ENCODE measurements at regions of chr1 and their contacts with region 1.

Region 1: DNA sequence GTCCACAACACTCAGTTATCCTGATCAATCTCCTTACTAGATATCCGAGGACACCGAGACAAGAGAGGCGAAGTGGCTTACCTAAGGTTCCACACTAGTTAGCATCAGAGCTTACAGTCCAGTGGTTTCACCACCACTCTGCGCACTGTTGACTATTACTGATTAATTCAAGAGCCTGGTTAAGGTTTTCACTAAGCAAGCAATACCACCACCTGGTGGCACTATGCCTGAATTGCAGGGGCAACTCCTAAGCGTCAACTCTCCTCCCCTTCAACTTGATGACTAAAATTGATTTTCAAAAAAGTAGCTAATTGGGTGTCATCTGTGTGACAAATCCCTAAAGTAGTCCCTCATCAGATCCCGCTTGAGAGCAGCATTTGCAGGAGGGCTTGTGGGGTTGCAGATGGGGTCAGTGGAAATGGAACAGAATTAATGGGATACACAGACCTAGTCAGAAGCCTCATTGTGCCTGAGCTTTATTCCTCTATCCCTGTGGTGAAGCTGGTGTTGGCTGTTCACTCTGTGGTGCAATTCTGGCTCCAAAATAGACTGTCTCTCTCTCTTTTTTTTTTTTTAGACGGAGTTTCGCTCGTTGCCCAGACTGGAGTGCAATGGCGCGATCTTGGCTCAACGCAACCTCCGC is 9.1 kb downstream of the TTC22 start:
- ATAC-seq: peak in 1 of 8 experiments; percentile 15
- H3K4me3 ChIP-seq: no peak overlapping the region
- H3K27ac ChIP-seq: no peak overlapping the region
- H3K4me1 ChIP-seq: peaks cover 24 to 44% of the 10 kb centered on the region in 2 donors

Region 2: GRCh38 chr1:54052934-54053744 is 738.9 kb before region 1 on chr1 and contains the starts of genes TCEANC2 and TMEM59:
- in situ Hi-C with region 1: loop called in 1 of 9 experiments (anchors 25 kb)
- ATAC-seq: peak; percentile 87 to 94 (median 92)
- H3K4me3 ChIP-seq: peak within 1 kb of the TSS; percentile 60 to 89 (median 76)
- H3K27ac ChIP-seq: peak within 1 kb of the TSS; percentile 79 to 90
- H3K4me1 ChIP-seq: peaks cover 7 to 24% of the 10 kb centered on the region in 2 donors
- total RNA-seq, gene TCEANC2: 3.0 to 10.1 (median 7.4) TPM
- total RNA-seq, gene TMEM59: 114 to 406 (median 146) TPM

Region 3: DNA sequence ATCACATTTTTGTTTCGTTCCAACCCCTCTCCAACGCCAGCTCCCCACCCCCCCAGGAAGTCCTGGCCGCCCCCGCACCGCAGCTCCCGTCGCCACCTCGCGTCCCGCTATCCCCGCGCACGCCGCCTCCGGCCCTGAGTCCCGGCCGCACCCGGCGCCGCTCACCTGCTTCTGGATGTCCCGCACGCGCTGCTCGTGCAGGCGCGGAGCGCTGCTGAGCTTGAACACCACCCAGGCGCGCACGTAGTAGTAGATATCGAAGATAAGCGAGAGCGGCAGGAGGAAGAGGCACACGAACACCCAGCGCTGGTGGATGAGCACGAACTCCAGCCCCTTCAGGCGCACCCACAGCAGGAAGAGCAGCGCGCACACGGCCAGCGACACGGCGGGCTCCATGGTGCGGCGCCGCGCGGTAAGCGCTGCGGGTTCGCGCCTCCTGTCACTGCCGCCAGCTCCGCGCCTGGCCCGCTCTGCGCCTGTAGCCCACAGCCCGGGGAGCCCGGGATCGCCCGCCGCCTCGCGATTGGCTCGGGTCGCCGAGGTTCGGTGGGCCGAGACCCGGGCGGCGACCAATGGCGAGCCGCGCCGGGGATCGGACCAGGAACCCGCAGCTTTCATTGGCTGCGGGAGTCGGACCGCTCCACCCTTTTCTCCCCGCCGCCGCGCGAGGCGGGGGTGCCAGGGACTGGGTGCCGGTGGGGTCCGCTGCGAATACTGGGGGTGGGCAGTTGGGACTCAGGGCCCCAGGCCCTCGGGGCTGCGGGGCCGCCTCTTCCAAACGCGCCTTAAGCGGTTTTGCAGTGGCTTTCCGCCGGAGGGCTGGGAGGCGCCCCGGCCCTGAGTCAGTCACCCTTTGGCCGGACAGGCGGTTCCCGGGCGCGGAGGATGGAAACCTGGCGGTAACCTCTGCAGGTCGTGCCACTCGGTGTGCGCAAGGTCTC is 95.0 kb after region 1 on chr1 and contains the start of gene DHCR24:
- in situ Hi-C with region 1: no loop called
- ATAC-seq: peak; percentile 87 to 96 (median 95)
- H3K4me3 ChIP-seq: peak within 1 kb of the TSS; percentile 59 to 87 (median 67)
- H3K27ac ChIP-seq: peak within 1 kb of the TSS; percentile 67 to 76
- H3K4me1 ChIP-seq: peaks cover 30 to 31% of the 10 kb centered on the region in 2 donors
- total RNA-seq, gene DHCR24: 10.0 to 155 (median 66.3) TPM

Region 4: GRCh38 chr1:55965981-55966461 is 1174.0 kb after region 1 on chr1:
- in situ Hi-C with region 1: no loop called
- ATAC-seq: no peak
- H3K4me3 ChIP-seq: no peak overlapping the region
- H3K27ac ChIP-seq: no peak overlapping the region
- H3K4me1 ChIP-seq: peaks cover 0 to 5% of the 10 kb centered on the region in 2 donors

Measured in motor neuron (in vitro differentiated cells).